H1 (cell line): ENCODE measurements at regions of chr14 and their contacts with region 1.

Region 1: DNA sequence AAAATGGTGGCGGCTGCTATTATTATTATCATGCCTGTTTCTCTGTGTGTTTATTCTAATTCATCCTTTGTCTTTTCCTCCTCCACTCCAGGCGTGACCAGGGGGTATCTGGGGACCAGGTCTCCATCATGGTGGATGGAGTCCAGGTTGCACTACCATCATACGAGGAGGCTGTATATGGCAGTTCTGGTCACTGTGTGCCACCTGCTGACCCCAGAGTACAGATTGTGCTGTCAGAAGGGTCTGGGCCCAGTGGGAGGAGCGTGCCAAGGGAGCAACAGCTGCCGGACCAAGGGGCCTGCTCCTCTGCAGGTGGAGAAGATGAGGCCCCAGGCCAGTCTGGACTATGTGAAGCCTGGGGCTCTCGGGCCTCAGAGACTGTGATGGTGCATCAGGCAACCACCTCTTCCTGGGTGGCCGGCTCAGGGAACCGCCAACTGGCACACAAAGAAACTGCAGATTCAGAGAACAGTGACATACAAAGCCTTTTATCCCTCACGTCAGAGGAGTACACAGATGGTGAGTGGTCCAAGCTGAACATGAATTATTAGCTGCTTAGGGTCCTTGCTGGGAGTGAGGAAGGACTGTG is 58.3 kb upstream of the SRSF5 start:
- DNase-seq: no peak
- H3K4me3 ChIP-seq: no peak overlapping the region
- H3K27ac ChIP-seq: no peak overlapping the region
- H3K4me1 ChIP-seq: peaks cover 6 to 26% (median 18%) of the 10 kb centered on the region in 4 experiments
- H3K27me3 ChIP-seq: no peaks in the 10 kb centered on the region
- CTCF ChIP-seq: peak; percentile 44 to 66 (median 60)
- EP300 ChIP-seq: no peak
- POLR2A ChIP-seq: no peak
- RAD21 ChIP-seq: peak; percentile 47 to 68

Region 2: GRCh38 chr14:69637503-69638030 is 71.1 kb before region 1 on chr14:
- CTCF ChIA-PET with region 1: interaction called, 14 read pairs
- POLR2A ChIA-PET with region 1: no interaction called
- DNase-seq: no peak
- H3K4me3 ChIP-seq: peak overlapping the region in 1 of 4 experiments; percentile 21; a peak in 2 of 8 replicates
- H3K27ac ChIP-seq: no peak overlapping the region
- H3K4me1 ChIP-seq: peaks cover 21 to 34% (median 27%) of the 10 kb centered on the region in 4 experiments
- H3K27me3 ChIP-seq: no peaks in the 10 kb centered on the region
- CTCF ChIP-seq: no peak
- EP300 ChIP-seq: no peak
- POLR2A ChIP-seq: no peak
- RAD21 ChIP-seq: no peak

Region 3: GRCh38 chr14:69696633-69697557 is 11.8 kb before region 1 on chr14:
- CTCF ChIA-PET with region 1: interaction called, 12 read pairs
- POLR2A ChIA-PET with region 1: interaction called, 4 read pairs
- DNase-seq: no peak
- H3K4me3 ChIP-seq: no peak overlapping the region
- H3K27ac ChIP-seq: no peak overlapping the region
- H3K4me1 ChIP-seq: peaks cover 5 to 25% (median 12%) of the 10 kb centered on the region in 4 experiments; a peak in 4 of 7 replicates
- H3K27me3 ChIP-seq: no peaks in the 10 kb centered on the region
- CTCF ChIP-seq: no peak
- EP300 ChIP-seq: no peak
- POLR2A ChIP-seq: no peak
- RAD21 ChIP-seq: no peak